ENCODE measurements at regions of chr17 and their contacts with region 1.

Region 1: DNA sequence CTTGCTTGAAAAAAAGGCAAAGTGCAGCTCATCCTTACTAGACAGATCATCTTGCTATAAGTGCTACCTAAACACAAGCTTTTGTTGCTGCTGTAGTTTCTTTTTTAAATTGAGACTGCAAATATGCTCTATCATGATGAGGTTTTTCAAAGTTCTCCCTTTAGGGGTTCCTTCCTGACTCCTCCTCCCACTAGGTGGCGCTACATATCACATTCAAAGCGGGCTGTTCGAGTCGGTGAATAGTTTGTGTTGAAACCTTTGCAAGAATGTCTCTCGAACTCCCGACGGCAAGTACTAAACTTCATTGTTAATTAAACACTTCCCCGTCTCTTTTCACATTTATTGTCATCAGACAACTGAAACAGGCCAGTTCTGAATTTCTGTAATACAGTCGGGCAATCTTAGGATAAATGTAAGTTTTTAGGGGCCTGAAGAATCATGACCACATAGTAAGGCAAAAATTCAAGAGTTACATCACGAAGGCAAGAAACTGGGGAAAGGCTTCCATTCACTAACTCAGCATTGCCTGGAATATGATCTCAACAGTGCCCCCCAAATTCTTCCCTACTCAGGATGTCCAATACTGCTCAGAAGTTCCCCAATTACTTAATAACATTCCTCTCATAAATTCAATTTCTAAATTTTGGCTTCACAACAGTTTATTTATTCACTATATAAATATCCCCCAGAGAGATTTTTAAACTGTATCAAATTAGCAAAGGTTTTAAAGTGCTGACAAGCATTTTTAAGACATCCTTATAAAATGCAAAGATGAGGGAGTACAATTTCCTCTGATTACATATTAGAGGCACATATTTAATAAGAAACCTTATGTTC is 6.7 kb downstream of the HS3ST3A1 start:
- ATAC-seq: peak; percentile 65 to 92 (median 72)
- H3K4me3 ChIP-seq: no peak overlapping the region
- H3K27ac ChIP-seq: no peak overlapping the region
- H3K4me1 ChIP-seq: peaks cover 4 to 17% of the 10 kb centered on the region in 2 donors

Region 2: GRCh38 chr17:13337864-13338371 is 257.1 kb before region 1 on chr17:
- in situ Hi-C with region 1: loop called in 3 of 9 experiments (anchors 10 to 25 kb)
- ATAC-seq: peak; percentile 32 to 83 (median 54)
- H3K4me3 ChIP-seq: peak overlapping the region in 4 of 5 donors; percentile 18 to 31 (median 22)
- H3K27ac ChIP-seq: no peak overlapping the region
- H3K4me1 ChIP-seq: peaks cover 0 to 2% of the 10 kb centered on the region in 2 donors

Region 3: GRCh38 chr17:13765701-13766100 is 170.7 kb after region 1 on chr17:
- in situ Hi-C with region 1: no loop called
- ATAC-seq: no peak
- H3K4me3 ChIP-seq: no peak overlapping the region
- H3K27ac ChIP-seq: no peak overlapping the region
- H3K4me1 ChIP-seq: peaks cover 8 to 14% of the 10 kb centered on the region in 2 donors

Region 4: GRCh38 chr17:14300575-14301278 is 705.7 kb after region 1 on chr17 and contains the start of gene HS3ST3B1:
- in situ Hi-C with region 1: loop called in 7 of 9 experiments (anchors 25 kb)
- ATAC-seq: peak; percentile 70 to 92 (median 88)
- H3K4me3 ChIP-seq: peak within 1 kb of the TSS; percentile 48 to 73 (median 59)
- H3K27ac ChIP-seq: peak within 1 kb of the TSS; percentile 12 to 62
- H3K4me1 ChIP-seq: peaks cover 6 to 7% of the 10 kb centered on the region in 2 donors
- total RNA-seq, gene HS3ST3B1: 1.9 to 97.1 (median 6.6) TPM

Region 5: GRCh38 chr17:14926526-14927122 is 1331.6 kb after region 1 on chr17:
- in situ Hi-C with region 1: loop called in 2 of 9 experiments (anchors 10 kb)
- ATAC-seq: peak in 2 of 8 experiments; percentile 40 to 49
- H3K4me3 ChIP-seq: no peak overlapping the region
- H3K27ac ChIP-seq: no peak overlapping the region
- H3K4me1 ChIP-seq: peaks cover 4 to 6% of the 10 kb centered on the region in 2 donors

Measured in motor neuron (in vitro differentiated cells).